Activated CD4-positive, alpha-beta T cell treated with anti-CD3 and anti-CD28 coated beads, Interleukin-2, amount 10 ng/mL, durations not matched to agents 7 days and 5 days (primary cell): ENCODE measurements at regions of chr17 and their contacts with region 1.

Region 1: GRCh38 chr17:4366327-4367063 is at the start of gene UBE2G1:
- DNase-seq: peak; percentile 98
- H3K4me3 Mint-ChIP-seq: peak within 1 kb of the TSS; percentile 67
- H3K27ac Mint-ChIP-seq: peak within 1 kb of the TSS; percentile 97
- H3K4me1 Mint-ChIP-seq: peaks cover 35% of the 10 kb centered on the region
- H3K27me3 Mint-ChIP-seq: no peaks in the 10 kb centered on the region
- total RNA-seq, gene UBE2G1: 51.6 to 56.7 TPM

Region 2: GRCh38 chr17:4276511-4276910 is 90.0 kb before region 1 on chr17:
- CTCF ChIA-PET with region 1: no interaction called
- POLR2A ChIA-PET with region 1: interaction called, 13 read pairs
- DNase-seq: no peak
- H3K4me3 Mint-ChIP-seq: no peak overlapping the region
- H3K27ac Mint-ChIP-seq: no peak overlapping the region
- H3K4me1 Mint-ChIP-seq: peaks cover 2% of the 10 kb centered on the region
- H3K27me3 Mint-ChIP-seq: no peaks in the 10 kb centered on the region